ENCODE measurements at regions of chr1 and their contacts with region 1.

Region 1: DNA sequence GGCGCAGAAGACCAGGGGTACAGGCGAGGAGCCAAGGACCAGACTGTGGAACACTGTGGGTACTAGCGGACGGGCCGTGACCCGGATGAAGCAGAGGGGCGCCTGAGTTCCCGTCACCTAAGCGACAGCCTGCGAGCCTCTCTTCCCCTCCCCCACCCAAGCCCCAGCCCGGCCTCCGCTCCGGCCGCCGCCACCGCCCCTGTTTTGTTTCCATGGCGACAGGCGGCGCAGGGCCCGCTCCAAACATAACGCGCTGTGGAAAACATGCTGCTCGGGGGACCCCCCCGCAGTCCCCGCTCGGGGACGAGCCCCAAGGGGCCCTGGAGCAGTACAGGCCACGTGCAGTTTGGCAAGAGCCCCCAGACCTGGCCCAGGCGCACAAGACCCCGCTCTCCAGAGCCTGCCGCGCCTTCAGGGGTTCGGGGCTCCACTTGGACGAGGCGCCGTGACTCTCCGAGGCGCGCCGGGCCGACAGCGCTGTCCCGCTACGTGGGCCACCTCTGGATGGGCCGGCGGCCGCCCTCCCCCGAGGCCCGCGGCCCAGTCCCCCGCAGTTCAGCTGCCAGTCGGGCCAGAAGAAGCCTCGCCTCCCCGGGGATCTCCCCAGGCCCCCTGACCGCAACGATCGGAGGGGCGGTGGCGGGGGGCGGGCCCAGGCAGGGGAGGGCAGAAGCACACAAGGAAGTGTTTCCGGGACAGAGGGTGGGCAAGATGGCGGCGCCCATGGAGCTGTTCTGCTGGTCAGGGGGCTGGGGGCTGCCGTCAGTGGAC is at the start of gene MTX1:
- DNase-seq: peak; percentile 95
- ATAC-seq: peak; percentile 79
- H3K4me3 ChIP-seq: peak within 1 kb of the TSS; percentile 67 to 94 (median 84)
- H3K4me3 Mint-ChIP-seq: peak within 1 kb of the TSS; percentile 81
- H3K27ac ChIP-seq: peak within 1 kb of the TSS; percentile 95 to 100
- H3K27ac Mint-ChIP-seq: peak within 1 kb of the TSS; percentile 91
- H3K4me1 ChIP-seq: peaks cover 21 to 26% of the 10 kb centered on the region in 2 donors
- H3K4me1 Mint-ChIP-seq: peaks cover 22% of the 10 kb centered on the region
- H3K27me3 ChIP-seq: no peaks in the 10 kb centered on the region
- H3K27me3 Mint-ChIP-seq: no peaks in the 10 kb centered on the region
- CTCF ChIP-seq: no peak
- total RNA-seq, gene MTX1: 18.4 and 19.0 TPM in 2 replicates

Region 2: DNA sequence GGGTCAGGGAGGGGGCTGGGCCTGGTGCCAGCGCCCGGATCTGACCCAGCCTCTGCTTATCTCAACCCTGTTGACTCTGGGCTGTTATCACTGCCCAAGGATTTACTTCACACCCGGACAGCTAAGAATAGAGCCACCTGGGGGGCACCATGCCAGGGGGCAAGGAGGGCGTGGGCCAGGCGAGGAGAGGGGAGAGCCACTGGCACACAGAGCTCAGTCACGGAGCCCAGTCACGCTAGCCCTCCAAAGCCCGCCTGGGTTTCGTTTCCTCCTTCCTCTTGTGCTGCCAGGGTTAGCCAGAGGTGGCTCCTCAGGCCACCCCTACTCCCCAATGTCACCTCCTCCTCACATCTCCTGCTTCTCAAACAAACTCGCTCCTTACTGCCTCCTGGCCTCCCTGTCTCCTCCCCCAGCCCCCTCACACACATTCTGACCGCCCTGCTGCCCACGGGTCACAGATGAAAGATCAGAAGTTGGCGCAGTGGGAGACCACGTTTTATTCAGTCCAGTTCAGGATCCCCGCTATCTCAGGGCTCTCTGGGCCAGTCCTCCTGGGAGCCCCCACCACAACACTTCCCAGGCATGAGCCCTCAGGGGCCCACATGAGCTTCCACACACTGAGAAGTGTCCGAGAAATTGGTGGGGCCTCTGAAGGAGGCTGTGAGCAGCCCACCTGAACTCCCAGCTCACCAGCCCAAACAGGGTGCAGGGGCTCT is 23.2 kb before region 1 on chr1:
- CTCF ChIA-PET with region 1: interaction called, 11 read pairs
- POLR2A ChIA-PET with region 1: no interaction called
- intact Hi-C with region 1: no loop called
- DNase-seq: peak; percentile 79
- ATAC-seq: peak; percentile 97
- H3K4me3 ChIP-seq: peak overlapping the region in 1 of 5 experiments; percentile 1
- H3K4me3 Mint-ChIP-seq: peak overlapping the region; percentile 23
- H3K27ac ChIP-seq: peak overlapping the region; percentile 38 to 41
- H3K27ac Mint-ChIP-seq: peak overlapping the region; percentile 86
- H3K4me1 ChIP-seq: peaks cover 18 to 31% of the 10 kb centered on the region in 2 donors
- H3K4me1 Mint-ChIP-seq: peaks cover 28% of the 10 kb centered on the region
- H3K27me3 ChIP-seq: no peaks in the 10 kb centered on the region
- H3K27me3 Mint-ChIP-seq: no peaks in the 10 kb centered on the region
- CTCF ChIP-seq: peak; percentile 24

Region 3: DNA sequence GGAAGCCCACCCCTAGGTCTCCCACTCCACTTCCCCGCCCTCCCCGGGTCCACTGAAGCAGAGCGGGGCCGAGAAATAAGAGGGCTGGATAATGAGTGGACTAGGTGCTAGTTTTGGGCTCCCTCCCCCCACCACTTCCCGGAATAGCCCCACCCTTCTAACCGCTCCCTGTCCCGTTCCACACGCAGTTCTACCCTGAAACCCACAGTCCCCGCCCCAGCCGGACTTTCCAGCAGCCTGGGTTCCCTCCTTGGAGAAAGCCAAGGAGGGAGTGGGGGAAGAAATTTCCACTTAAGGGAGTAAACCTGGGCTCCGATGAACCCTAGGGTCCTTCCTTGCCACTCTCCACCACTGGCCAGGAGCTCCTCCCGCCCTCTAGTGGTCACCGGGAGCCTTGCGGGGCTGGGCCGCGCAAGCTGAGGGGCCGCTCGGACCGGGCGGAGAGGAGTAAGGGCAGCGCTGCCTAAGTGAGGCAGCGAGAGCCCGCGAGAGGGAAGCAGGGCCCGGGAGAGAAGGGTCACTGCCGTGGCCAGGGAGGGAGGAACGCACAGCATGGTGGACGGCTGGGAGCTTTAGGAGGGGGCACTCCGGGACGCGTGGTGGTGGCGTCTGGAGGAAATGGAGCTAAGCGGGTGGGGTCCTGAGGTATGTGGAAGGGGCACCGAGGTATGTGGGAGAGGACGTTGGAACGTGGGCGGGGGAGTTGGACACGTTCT is 15.3 kb before region 1 on chr1:
- CTCF ChIA-PET with region 1: interaction called, 52 read pairs
- POLR2A ChIA-PET with region 1: interaction called, 3 read pairs
- intact Hi-C with region 1: loop called (anchors 2 kb)
- DNase-seq: peak; percentile 82
- ATAC-seq: peak; percentile 72
- H3K4me3 ChIP-seq: peak overlapping the region; percentile 44 to 74 (median 50)
- H3K4me3 Mint-ChIP-seq: peak overlapping the region; percentile 91
- H3K27ac ChIP-seq: no peak overlapping the region
- H3K27ac Mint-ChIP-seq: peak overlapping the region; percentile 89
- H3K4me1 ChIP-seq: peaks cover 15 to 23% of the 10 kb centered on the region in 2 donors
- H3K4me1 Mint-ChIP-seq: peaks cover 30% of the 10 kb centered on the region
- H3K27me3 ChIP-seq: peaks cover 0 to 19% (median 1%) of the 10 kb centered on the region in 4 experiments
- H3K27me3 Mint-ChIP-seq: no peaks in the 10 kb centered on the region
- CTCF ChIP-seq: peak; percentile 94

Region 4: DNA sequence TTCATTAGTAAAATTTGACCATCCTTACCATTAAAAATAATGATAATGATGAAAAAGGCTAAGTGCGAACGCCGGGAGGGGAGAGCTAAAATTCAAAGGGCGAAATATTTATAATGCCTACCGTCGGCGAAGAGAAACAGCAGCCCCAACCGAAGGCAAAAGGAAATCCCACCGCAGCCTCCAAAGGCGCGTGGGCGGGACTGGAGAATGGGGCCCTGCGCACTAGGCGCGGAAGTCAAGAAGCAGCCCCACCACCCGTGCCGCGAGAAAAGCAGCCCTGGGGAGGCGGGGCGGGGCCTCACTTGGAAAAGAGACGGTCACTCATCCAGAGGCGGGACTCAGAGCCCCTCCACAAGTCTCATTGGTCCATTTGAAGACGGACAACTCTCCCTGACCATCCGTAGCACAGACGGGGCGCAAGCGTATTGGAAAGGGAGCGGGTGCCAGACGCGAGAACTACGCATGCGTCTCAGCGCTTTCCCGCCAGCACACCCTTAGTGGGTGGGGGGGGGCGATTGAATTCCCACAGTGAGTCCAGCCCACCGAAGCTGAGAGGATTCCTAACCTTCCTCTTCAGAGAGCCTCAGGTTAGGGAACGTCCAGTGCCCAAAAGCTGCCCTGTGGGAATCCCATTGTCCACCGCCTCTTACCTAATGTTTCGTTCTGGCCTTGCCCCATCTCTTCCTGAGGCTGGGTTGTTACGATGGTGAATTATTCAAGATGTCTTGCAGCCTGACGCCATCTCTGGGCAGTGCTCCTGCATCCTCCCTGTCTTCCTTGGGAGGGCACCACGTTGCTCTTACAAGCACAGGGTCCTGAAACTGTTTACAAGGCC is 18.8 kb after region 1 on chr1:
- CTCF ChIA-PET with region 1: interaction called, 189 read pairs
- POLR2A ChIA-PET with region 1: interaction called, 47 read pairs
- intact Hi-C with region 1: loop called (anchors 1 kb)
- DNase-seq: peak; percentile 98
- ATAC-seq: peak; percentile 97
- H3K4me3 ChIP-seq: peak overlapping the region; percentile 61 to 93 (median 68)
- H3K4me3 Mint-ChIP-seq: peak overlapping the region; percentile 85
- H3K27ac ChIP-seq: peak overlapping the region; percentile 70
- H3K27ac Mint-ChIP-seq: peak overlapping the region; percentile 91
- H3K4me1 ChIP-seq: peaks cover 43 to 56% of the 10 kb centered on the region in 2 donors
- H3K4me1 Mint-ChIP-seq: peaks cover 43% of the 10 kb centered on the region
- H3K27me3 ChIP-seq: no peaks in the 10 kb centered on the region
- H3K27me3 Mint-ChIP-seq: no peaks in the 10 kb centered on the region
- CTCF ChIP-seq: no peak

Region 5: GRCh38 chr1:155244368-155245162 is 35.8 kb after region 1 on chr1:
- CTCF ChIA-PET with region 1: interaction called, 46 read pairs
- POLR2A ChIA-PET with region 1: interaction called, 3 read pairs
- intact Hi-C with region 1: loop called (anchors 1 kb)
- DNase-seq: peak; percentile 95
- ATAC-seq: peak; percentile 97
- H3K4me3 ChIP-seq: peak overlapping the region; percentile 60 to 79 (median 67)
- H3K4me3 Mint-ChIP-seq: peak overlapping the region; percentile 82
- H3K27ac ChIP-seq: peak overlapping the region; percentile 62 to 71
- H3K27ac Mint-ChIP-seq: peak overlapping the region; percentile 96
- H3K4me1 ChIP-seq: peaks cover 27 to 36% of the 10 kb centered on the region in 2 donors
- H3K4me1 Mint-ChIP-seq: peaks cover 33% of the 10 kb centered on the region
- H3K27me3 ChIP-seq: no peaks in the 10 kb centered on the region
- H3K27me3 Mint-ChIP-seq: peaks cover 4% of the 10 kb centered on the region
- CTCF ChIP-seq: peak; percentile 45

Region 6: GRCh38 chr1:155591770-155592169 is 383.0 kb after region 1 on chr1:
- CTCF ChIA-PET with region 1: interaction called, 8 read pairs
- POLR2A ChIA-PET with region 1: no interaction called
- intact Hi-C with region 1: loop called (anchors 5 kb)
- DNase-seq: peak; percentile 74
- ATAC-seq: peak; percentile 60
- H3K4me3 ChIP-seq: no peak overlapping the region
- H3K4me3 Mint-ChIP-seq: no peak overlapping the region
- H3K27ac ChIP-seq: no peak overlapping the region
- H3K27ac Mint-ChIP-seq: no peak overlapping the region
- H3K4me1 ChIP-seq: no peaks in the 10 kb centered on the region
- H3K4me1 Mint-ChIP-seq: no peaks in the 10 kb centered on the region
- H3K27me3 ChIP-seq: no peaks in the 10 kb centered on the region
- H3K27me3 Mint-ChIP-seq: no peaks in the 10 kb centered on the region
- CTCF ChIP-seq: peak; percentile 75